Psoas muscle (tissue), 8 donors: ENCODE measurements at regions of chr10 and their contacts with region 1.

Region 1: GRCh38 chr10:101291331-101292193 is 62.3 kb upstream of the LBX1 start:
- DNase-seq: peak; percentile 71 to 89
- ATAC-seq: peak; percentile 88 to 92 (median 90)
- H3K4me3 ChIP-seq: peak overlapping the region; percentile 81
- H3K27ac ChIP-seq: peak overlapping the region; percentile 88
- H3K4me1 ChIP-seq: peaks cover 16% of the 10 kb centered on the region
- H3K27me3 ChIP-seq: peaks cover 0 to 17% (median 0%) of the 10 kb centered on the region in 3 donors
- CTCF ChIP-seq: peak; percentile 71

Region 2: DNA sequence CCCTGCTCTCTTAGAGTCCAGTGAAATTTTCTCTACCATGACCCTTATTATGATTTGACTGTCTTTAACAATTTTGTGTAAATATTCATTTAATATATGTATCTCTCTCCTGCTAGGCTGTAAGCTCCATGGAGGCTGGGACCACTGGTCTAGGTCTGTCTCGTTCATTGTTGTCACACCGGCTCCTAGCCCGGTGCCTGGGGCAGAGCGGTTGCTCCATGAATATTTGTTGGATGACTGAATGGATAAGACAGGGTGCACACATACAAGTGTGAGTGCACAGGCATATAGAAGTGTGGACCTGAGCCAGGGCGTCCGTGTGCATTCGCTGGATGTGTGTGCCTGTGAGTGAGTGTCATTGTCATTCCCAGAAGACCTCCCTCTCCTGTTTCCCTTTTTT is 41.4 kb before region 1 on chr10:
- intact Hi-C with region 1: loop called in 1 of 2 experiments (anchors 5 kb)
- DNase-seq: no peak
- ATAC-seq: no peak
- H3K4me3 ChIP-seq: no peak overlapping the region
- H3K27ac ChIP-seq: no peak overlapping the region
- H3K4me1 ChIP-seq: no peaks in the 10 kb centered on the region
- H3K27me3 ChIP-seq: peaks cover 0 to 4% (median 2%) of the 10 kb centered on the region in 3 donors
- CTCF ChIP-seq: no peak

Region 3: GRCh38 chr10:101453791-101454718 is 162.5 kb after region 1 on chr10:
- intact Hi-C with region 1: no loop called
- DNase-seq: no peak
- ATAC-seq: no peak
- H3K4me3 ChIP-seq: no peak overlapping the region
- H3K27ac ChIP-seq: no peak overlapping the region
- H3K4me1 ChIP-seq: peaks cover 16% of the 10 kb centered on the region
- H3K27me3 ChIP-seq: no peaks in the 10 kb centered on the region
- CTCF ChIP-seq: no peak